Transverse colon (tissue), 4 donors: ENCODE measurements at regions of chr3 and their contacts with region 1.

Region 1: GRCh38 chr3:166322394-166322793 is 485.2 kb upstream of the BCHE start:
- DNase-seq: no peak
- H3K4me3 ChIP-seq: no peak overlapping the region
- H3K27ac ChIP-seq: no peak overlapping the region
- H3K4me1 ChIP-seq: no peaks in the 10 kb centered on the region
- H3K27me3 ChIP-seq: no peaks in the 10 kb centered on the region
- CTCF ChIP-seq: no peak
- EP300 ChIP-seq: no peak
- POLR2A ChIP-seq: no peak

Region 2: GRCh38 chr3:165523801-165524200 is 798.6 kb before region 1 on chr3:
- in situ Hi-C with region 1: no loop called
- intact Hi-C with region 1: loop called (anchors 5 kb)
- DNase-seq: no peak
- H3K4me3 ChIP-seq: no peak overlapping the region
- H3K27ac ChIP-seq: no peak overlapping the region
- H3K4me1 ChIP-seq: no peaks in the 10 kb centered on the region
- H3K27me3 ChIP-seq: no peaks in the 10 kb centered on the region
- CTCF ChIP-seq: no peak
- EP300 ChIP-seq: no peak
- POLR2A ChIP-seq: no peak